H1 (cell line): ENCODE measurements at regions of chr2 and their contacts with region 1.

Region 1: GRCh38 chr2:42974721-42975717 is 182.6 kb upstream of the HAAO start:
- DNase-seq: peak; percentile 56 to 96
- H3K4me3 ChIP-seq: peak overlapping the region in 3 of 4 experiments; percentile 18 to 51 (median 34); a peak in 5 of 8 replicates
- H3K27ac ChIP-seq: no peak overlapping the region
- H3K4me1 ChIP-seq: peaks cover 0 to 7% (median 4%) of the 10 kb centered on the region in 4 experiments; a peak in 4 of 7 replicates
- H3K27me3 ChIP-seq: no peaks in the 10 kb centered on the region; a peak in 1 of 7 replicates
- CTCF ChIP-seq: peak; percentile 85 to 91 (median 89)
- EP300 ChIP-seq: 0 out of 3 replicates have a peak, but pooled peaks of 1 of the 2 experiments have one; percentile 22
- POLR2A ChIP-seq: no peak
- RAD21 ChIP-seq: peak; percentile 88 to 92

Region 2: GRCh38 chr2:42928692-42929545 is 46.1 kb before region 1 on chr2:
- CTCF ChIA-PET with region 1: interaction called, 58 read pairs
- POLR2A ChIA-PET with region 1: no interaction called
- DNase-seq: peak in 1 of 2 experiments; percentile 70
- H3K4me3 ChIP-seq: no peak overlapping the region; a peak in 1 of 8 replicates
- H3K27ac ChIP-seq: peak overlapping the region; percentile 56
- H3K4me1 ChIP-seq: peaks cover 29 to 49% (median 41%) of the 10 kb centered on the region in 4 experiments
- H3K27me3 ChIP-seq: no peaks in the 10 kb centered on the region
- CTCF ChIP-seq: peak in 2 of 3 experiments; percentile 69 to 77; a peak in 3 of 4 replicates
- EP300 ChIP-seq: no peak
- POLR2A ChIP-seq: no peak
- RAD21 ChIP-seq: peak; percentile 33 to 48; a peak in 3 of 4 replicates

Region 3: DNA sequence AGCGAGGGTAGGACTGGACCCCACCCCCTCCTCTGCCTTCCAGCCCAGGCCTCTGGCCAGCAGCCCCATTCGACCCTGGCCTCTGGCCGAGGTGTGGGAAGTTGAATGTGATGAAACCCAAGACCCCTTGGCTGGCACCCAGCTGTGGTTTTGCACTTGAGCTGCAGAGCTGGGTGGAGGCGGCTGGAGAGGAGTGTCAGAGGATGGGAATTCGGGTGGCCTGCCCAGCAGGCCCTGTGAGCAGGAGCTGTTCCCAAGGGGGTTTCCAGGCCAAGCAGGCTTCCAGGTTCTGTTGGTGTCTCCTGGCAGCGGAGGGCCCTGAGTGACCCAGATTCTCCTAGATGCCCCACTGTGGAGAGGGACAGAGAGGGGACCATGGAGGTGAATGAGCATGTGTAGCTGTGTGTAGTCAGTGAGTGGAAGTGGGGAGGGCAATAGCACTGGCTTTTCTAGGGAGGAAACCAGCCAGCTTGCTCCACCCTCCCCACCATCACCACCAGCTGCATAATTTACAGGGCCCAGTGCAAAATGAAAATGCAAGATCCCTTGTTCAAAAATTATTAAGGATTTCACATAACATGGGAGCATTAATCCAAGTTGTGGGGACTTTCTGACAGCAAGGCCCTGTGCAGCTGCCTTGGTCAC is 10.5 kb before region 1 on chr2:
- CTCF ChIA-PET with region 1: interaction called, 17 read pairs
- POLR2A ChIA-PET with region 1: interaction called, 4 read pairs
- DNase-seq: no peak
- H3K4me3 ChIP-seq: no peak overlapping the region
- H3K27ac ChIP-seq: no peak overlapping the region
- H3K4me1 ChIP-seq: peaks cover 2 to 14% (median 8%) of the 10 kb centered on the region in 4 experiments
- H3K27me3 ChIP-seq: peaks cover 0 to 3% (median under 1%) of the 10 kb centered on the region in 4 experiments; a peak in 1 of 7 replicates
- CTCF ChIP-seq: no peak
- EP300 ChIP-seq: no peak
- POLR2A ChIP-seq: no peak
- RAD21 ChIP-seq: no peak

Region 4: GRCh38 chr2:42987112-42987922 is 12.3 kb after region 1 on chr2:
- CTCF ChIA-PET with region 1: interaction called, 30 read pairs
- POLR2A ChIA-PET with region 1: no interaction called
- DNase-seq: no peak
- H3K4me3 ChIP-seq: no peak overlapping the region
- H3K27ac ChIP-seq: no peak overlapping the region
- H3K4me1 ChIP-seq: no peaks in the 10 kb centered on the region
- H3K27me3 ChIP-seq: no peaks in the 10 kb centered on the region
- CTCF ChIP-seq: no peak
- EP300 ChIP-seq: no peak
- POLR2A ChIP-seq: no peak
- RAD21 ChIP-seq: no peak

Region 5: GRCh38 chr2:43005245-43005974 is 30.4 kb after region 1 on chr2:
- CTCF ChIA-PET with region 1: interaction called, 27 read pairs
- POLR2A ChIA-PET with region 1: interaction called, 3 read pairs
- DNase-seq: no peak
- H3K4me3 ChIP-seq: no peak overlapping the region
- H3K27ac ChIP-seq: no peak overlapping the region
- H3K4me1 ChIP-seq: peaks cover 0 to 3% (median 0%) of the 10 kb centered on the region in 4 experiments; a peak in 1 of 7 replicates
- H3K27me3 ChIP-seq: no peaks in the 10 kb centered on the region
- CTCF ChIP-seq: no peak
- EP300 ChIP-seq: no peak
- POLR2A ChIP-seq: no peak
- RAD21 ChIP-seq: no peak

Region 6: DNA sequence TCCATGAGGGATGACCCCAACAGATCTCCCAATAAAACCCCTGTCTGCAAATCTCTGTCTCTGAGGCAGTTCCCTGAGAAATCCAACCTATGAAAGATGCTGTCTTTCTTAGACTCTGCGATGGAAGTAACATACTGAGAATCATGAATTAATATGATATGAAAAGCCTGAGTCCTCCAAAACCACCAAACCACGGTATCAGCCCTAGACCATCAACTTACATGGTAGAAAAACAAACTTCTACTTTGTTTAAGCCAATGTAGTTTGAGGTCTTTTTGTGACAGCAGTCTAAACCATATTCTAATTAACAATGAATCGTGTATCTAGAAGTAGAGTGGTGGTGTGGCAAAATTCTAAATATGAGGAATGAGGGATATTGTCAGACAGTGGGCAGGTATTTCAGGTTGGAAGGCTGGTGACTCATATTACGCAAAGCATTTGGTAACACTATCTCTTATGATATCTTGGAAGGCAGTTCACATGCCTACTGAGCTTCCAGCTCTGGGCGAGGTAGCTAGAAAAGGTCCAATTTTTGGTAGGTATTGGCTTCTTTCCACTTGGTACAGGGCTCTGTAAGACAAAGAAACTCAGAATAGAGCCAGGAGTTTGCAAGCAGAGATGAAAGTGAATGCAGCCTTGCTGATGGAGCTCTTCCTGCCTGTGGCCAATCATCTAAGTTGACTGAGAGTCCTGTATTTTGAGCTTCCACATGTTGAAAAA is 35.6 kb after region 1 on chr2:
- CTCF ChIA-PET with region 1: interaction called, 27 read pairs
- POLR2A ChIA-PET with region 1: interaction called, 3 read pairs
- DNase-seq: no peak
- H3K4me3 ChIP-seq: no peak overlapping the region
- H3K27ac ChIP-seq: no peak overlapping the region
- H3K4me1 ChIP-seq: peaks cover 0 to 5% (median 1%) of the 10 kb centered on the region in 4 experiments; a peak in 2 of 7 replicates
- H3K27me3 ChIP-seq: no peaks in the 10 kb centered on the region
- CTCF ChIP-seq: no peak
- EP300 ChIP-seq: no peak
- POLR2A ChIP-seq: no peak
- RAD21 ChIP-seq: no peak

Region 7: DNA sequence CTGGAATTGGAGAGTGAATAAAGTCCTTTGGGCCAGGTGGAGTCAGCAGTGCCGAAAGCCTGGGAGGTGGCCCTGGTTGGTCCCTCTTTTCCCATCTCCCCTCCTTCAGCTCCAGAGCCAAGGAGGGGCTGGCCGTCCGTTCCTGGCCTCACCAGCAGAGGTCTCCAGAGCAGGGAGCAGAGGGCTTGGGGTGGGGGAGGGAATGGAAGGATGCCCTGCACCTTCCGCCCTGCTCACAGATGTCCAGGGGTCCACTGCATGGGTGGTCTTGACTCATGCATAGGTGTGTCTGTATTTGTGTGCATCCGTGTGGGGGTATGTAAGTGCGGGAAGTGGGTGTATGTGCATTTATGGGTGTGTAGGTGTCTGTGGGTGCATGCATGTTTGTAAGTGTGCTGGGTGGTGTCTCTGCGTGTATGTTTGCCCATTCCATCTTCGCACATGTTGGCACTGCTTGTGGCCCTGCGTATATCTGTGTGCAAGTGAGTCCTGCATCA is 49.5 kb after region 1 on chr2:
- CTCF ChIA-PET with region 1: interaction called, 25 read pairs
- POLR2A ChIA-PET with region 1: interaction called, 4 read pairs
- DNase-seq: peak; percentile 38 to 89
- H3K4me3 ChIP-seq: no peak overlapping the region
- H3K27ac ChIP-seq: no peak overlapping the region
- H3K4me1 ChIP-seq: peaks cover 2 to 10% (median 3%) of the 10 kb centered on the region in 4 experiments; a peak in 4 of 7 replicates
- H3K27me3 ChIP-seq: no peaks in the 10 kb centered on the region
- CTCF ChIP-seq: peak; percentile 87 to 93 (median 90)
- EP300 ChIP-seq: no peak
- POLR2A ChIP-seq: no peak
- RAD21 ChIP-seq: peak; percentile 88 to 93